ENCODE measurements at regions of chr18 and their contacts with region 1.

Region 1: DNA sequence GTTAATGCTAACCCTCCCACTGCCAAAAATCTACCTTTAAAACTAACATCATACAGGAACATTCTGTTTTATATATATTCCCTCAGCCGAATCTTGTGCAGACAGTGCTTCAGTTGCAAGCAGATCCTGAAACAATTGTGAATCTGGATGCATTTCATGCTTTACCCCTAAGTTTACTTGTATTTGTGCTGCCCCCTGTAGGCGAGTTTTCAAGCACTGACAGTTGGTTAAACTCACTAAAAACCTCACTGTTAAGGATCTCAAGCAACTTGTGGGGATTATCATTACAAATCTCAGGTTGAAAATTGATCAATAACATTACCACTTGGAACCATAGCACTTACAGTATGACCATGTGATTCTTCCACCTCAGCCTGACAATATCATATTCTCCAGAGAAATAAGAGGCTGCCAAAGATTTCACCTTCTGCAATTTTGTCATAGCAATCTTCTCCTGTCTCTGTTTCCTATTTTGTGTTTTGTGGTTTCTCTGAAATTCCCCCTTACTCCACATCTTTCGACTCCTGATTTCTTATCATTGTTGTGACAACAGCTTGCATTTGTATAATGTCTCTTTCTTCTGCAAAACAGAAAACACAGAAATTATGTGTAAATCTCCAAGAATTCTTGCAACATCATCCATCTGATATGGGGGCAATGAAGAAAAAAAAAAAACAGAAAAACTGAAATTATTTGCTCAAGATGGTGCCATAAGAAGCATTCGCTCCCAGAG is 354.6 kb upstream of the SETBP1 start:
- DNase-seq: peak in 1 of 2 donors; percentile 14
- ATAC-seq: no peak
- H3K4me3 ChIP-seq: no peak overlapping the region
- H3K27ac ChIP-seq: no peak overlapping the region
- H3K4me1 ChIP-seq: no peaks in the 10 kb centered on the region
- H3K27me3 ChIP-seq: no peaks in the 10 kb centered on the region
- CTCF ChIP-seq: peak in 3 of 5 experiments; percentile 29 to 50 (median 33)
- POLR2A ChIP-seq: no peak

Region 2: DNA sequence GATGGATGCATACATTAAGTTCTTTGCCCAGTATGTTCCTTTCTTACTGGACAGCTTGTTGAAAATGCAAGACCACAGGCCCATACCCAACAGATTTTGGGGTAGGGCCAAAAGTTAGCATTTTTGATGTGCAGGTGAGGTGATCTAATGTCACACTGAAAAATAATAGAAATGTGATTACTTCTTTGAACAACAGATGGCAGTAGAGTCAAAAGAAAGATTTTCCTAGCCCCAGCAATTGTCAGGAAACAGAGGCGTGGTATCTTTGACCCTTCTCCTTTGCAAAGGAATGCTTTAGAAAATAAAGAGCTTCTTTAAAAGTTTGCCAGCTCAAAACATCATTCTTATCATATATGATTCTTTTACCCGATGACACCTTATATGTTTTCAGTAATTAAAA is 705.1 kb before region 1 on chr18:
- in situ Hi-C with region 1: loop called in 1 of 4 experiments (anchors 25 kb)
- intact Hi-C with region 1: loop called (anchors 5 kb)
- DNase-seq: no peak
- ATAC-seq: no peak
- H3K4me3 ChIP-seq: no peak overlapping the region
- H3K27ac ChIP-seq: no peak overlapping the region
- H3K4me1 ChIP-seq: no peaks in the 10 kb centered on the region
- H3K27me3 ChIP-seq: no peaks in the 10 kb centered on the region
- CTCF ChIP-seq: peak; percentile 39 to 56 (median 51)
- POLR2A ChIP-seq: no peak

Region 3: GRCh38 chr18:44298566-44298965 is 27.5 kb before region 1 on chr18:
- in situ Hi-C with region 1: no loop called
- intact Hi-C with region 1: no loop called
- DNase-seq: no peak
- ATAC-seq: no peak
- H3K4me3 ChIP-seq: no peak overlapping the region
- H3K27ac ChIP-seq: no peak overlapping the region
- H3K4me1 ChIP-seq: no peaks in the 10 kb centered on the region
- H3K27me3 ChIP-seq: no peaks in the 10 kb centered on the region
- CTCF ChIP-seq: no peak
- POLR2A ChIP-seq: no peak

Region 4: GRCh38 chr18:44356566-44357157 is 30.6 kb after region 1 on chr18:
- in situ Hi-C with region 1: no loop called
- intact Hi-C with region 1: no loop called
- DNase-seq: no peak
- ATAC-seq: no peak
- H3K4me3 ChIP-seq: no peak overlapping the region
- H3K27ac ChIP-seq: no peak overlapping the region
- H3K4me1 ChIP-seq: no peaks in the 10 kb centered on the region
- H3K27me3 ChIP-seq: no peaks in the 10 kb centered on the region
- CTCF ChIP-seq: no peak
- POLR2A ChIP-seq: no peak

Region 5: DNA sequence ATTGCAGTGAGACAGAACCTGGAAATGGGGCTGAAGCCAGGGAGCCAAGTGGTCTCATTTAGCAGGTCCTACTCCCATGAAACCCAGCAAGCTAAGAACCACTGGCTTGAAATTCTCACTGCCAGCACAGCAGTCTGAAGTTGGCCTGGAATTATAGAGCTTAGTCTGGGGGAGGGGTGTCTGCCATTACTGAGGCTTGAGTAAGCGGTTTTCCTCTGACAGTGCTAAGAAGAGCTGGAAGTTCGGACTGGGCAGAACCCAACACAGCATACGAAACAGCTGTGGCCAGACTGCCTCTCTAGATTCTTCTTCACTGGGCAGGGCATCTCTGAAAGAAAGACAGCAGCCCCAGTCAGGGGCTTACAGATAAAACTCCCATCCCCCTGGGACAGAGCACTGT is 48.9 kb after region 1 on chr18:
- in situ Hi-C with region 1: no loop called
- intact Hi-C with region 1: no loop called
- DNase-seq: no peak
- ATAC-seq: no peak
- H3K4me3 ChIP-seq: no peak overlapping the region
- H3K27ac ChIP-seq: no peak overlapping the region
- H3K4me1 ChIP-seq: no peaks in the 10 kb centered on the region
- H3K27me3 ChIP-seq: no peaks in the 10 kb centered on the region
- CTCF ChIP-seq: no peak
- POLR2A ChIP-seq: no peak

Region 6: GRCh38 chr18:45119876-45120275 is 793.8 kb after region 1 on chr18:
- in situ Hi-C with region 1: no loop called
- intact Hi-C with region 1: no loop called
- DNase-seq: no peak
- ATAC-seq: no peak
- H3K4me3 ChIP-seq: no peak overlapping the region
- H3K27ac ChIP-seq: no peak overlapping the region
- H3K4me1 ChIP-seq: no peaks in the 10 kb centered on the region
- H3K27me3 ChIP-seq: no peaks in the 10 kb centered on the region
- CTCF ChIP-seq: no peak
- POLR2A ChIP-seq: no peak